Activated naive CD4-positive, alpha-beta T cell treated with anti-CD3 and anti-CD28 coated beads for 36 hours (primary cell): ENCODE measurements at regions of chr6 and their contacts with region 1.

Region 1: DNA sequence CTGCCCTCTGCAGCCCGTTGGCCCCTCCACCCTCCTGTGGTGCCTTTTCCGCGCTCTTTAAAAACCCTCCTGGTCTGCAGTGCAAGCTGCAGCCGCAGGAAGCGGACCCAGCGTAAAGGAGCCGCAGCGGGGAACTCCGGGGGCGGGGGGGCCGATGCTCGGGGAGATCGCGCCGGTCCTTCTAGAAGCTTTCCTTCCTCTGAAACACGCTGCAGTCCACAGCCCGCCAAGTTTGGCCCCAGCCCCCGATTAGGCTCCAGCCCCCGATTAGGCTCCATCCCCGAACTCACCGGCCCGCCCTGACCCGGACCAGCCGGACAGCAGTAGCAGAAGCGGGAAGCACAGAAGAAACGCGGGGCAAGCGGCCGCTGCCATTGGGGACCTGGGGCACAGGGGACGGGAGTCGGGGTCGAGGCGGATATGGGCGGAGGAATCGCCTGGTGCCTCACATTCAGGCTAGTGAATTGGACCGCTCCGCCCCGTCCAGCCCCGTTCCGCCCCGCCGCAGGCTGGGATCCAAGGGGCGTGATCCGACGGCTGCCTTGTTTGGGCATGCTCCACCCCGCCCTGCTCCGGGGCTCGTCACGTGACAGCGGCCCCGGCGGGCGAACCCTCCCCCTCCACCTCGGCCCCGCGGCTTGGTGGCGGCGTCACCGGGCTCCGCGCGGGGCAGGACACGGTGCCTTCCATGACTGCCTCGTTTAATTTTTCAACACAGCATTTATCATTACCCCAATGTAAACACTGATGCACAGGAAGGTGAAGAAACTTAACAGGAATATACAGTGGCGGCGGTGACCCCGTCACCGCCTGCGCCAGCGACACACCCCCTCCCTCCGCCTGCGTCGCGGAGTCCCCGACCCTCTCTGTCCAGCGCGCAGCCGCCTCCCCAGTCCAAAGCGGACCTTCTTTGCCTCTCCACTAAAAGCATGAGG is 20.3 kb downstream of the RAET1L start:
- DNase-seq: peak; percentile 94
- H3K4me3 Mint-ChIP-seq: peak overlapping the region; percentile 86
- H3K27ac Mint-ChIP-seq: no peak overlapping the region
- H3K4me1 Mint-ChIP-seq: peaks cover 51% of the 10 kb centered on the region
- H3K27me3 Mint-ChIP-seq: peaks cover 26% of the 10 kb centered on the region

Region 2: DNA sequence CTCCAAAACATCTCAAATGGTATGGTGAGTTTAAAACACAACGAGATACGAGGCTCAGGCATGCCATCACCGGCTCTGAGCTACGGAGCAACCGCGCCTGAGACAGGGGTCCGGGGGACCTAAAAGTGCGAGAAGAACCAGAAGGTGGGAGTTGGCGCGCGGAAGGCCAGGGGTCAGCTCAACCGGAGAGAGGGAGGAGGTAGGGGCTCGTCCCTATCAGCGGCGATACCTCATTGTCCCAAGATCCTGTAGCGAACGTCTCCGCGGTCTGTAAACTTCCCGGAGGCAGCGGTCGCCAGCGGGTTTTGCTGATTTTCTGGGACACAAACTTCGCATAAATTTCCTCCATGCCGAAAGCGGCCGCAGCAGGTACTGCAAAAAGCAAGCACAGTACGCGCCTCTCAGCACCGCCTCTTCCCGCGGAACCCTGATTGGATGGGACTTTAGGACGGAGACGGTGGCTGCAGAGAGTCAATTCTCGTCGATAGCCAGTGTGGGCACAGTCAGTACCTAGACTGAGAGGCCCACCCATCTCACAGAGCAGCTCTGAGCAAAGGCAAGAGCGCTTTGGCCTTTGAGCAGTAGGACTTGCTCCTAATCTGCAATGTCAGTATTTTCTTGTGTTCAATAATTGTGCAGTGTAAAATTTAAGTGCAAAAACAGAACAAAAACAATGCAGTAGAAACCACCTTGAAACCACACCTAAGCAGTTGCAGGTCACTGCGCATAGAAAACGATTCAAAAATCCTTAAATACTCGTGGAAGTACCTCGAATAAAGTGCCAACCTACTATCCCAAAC is 258.7 kb before region 1 on chr6 and contains the start of gene NUP43:
- CTCF ChIA-PET with region 1: no interaction called
- intact Hi-C with region 1: loop called (anchors 2 kb)
- DNase-seq: peak; percentile 99
- H3K4me3 Mint-ChIP-seq: peak within 1 kb of the TSS; percentile 99
- H3K27ac Mint-ChIP-seq: peak within 1 kb of the TSS; percentile 87
- H3K4me1 Mint-ChIP-seq: peaks cover 31% of the 10 kb centered on the region
- H3K27me3 Mint-ChIP-seq: no peaks in the 10 kb centered on the region
- total RNA-seq, gene NUP43: 68.1 to 71.9 TPM

Region 3: GRCh38 chr6:149963462-149964307 is 41.4 kb before region 1 on chr6 and contains the start of gene ULBP1:
- CTCF ChIA-PET with region 1: interaction called, 6 read pairs
- intact Hi-C with region 1: loop called (anchors 1 kb)
- DNase-seq: peak; percentile 93
- H3K4me3 Mint-ChIP-seq: peak within 1 kb of the TSS; percentile 90
- H3K27ac Mint-ChIP-seq: peak within 1 kb of the TSS; percentile 78
- H3K4me1 Mint-ChIP-seq: peaks cover 19% of the 10 kb centered on the region
- H3K27me3 Mint-ChIP-seq: peaks cover 63% of the 10 kb centered on the region
- total RNA-seq, gene ULBP1: 2.6 to 2.8 TPM

Region 4: DNA sequence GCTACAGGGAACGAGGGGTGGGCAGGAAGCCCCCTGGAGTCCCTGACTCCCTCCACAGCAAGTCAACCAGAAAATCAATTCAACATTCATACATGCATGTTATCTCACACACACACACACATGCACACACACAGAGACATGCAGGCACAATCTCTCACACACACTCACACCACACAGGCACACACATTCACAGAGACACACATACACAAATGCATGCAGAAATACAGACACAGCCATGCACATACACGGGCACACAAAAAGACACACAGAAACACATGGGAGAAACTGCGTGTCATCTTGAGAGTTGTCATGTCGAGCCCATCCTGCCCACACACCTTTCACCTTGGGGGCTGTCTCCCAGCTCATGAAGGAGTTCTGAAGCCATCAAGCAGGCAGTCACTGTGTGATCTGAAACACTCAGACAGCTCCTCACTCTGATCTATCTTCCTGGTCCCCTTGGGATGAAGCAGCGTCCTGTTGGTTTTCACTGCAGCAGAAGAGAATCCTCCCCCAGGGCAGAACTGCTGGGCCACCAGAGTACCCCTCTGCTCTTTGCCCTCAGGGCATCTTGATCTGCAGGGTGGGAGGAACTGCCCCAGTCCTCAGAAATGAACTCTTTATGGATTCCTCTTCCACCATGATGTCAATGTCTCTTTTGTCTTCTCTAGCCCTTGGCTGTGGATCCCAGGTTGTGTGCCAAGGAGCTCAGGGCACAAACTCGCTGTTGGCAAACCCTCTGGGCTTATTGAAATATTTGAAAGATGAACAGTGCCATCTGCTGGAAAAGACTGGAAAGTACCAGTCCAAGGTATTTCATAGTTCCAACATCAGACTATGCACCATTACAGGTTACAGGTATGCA is 11.5 kb after region 1 on chr6:
- CTCF ChIA-PET with region 1: no interaction called
- intact Hi-C with region 1: loop called (anchors 1 kb)
- DNase-seq: peak; percentile 66
- H3K4me3 Mint-ChIP-seq: no peak overlapping the region
- H3K27ac Mint-ChIP-seq: no peak overlapping the region
- H3K4me1 Mint-ChIP-seq: peaks cover 14% of the 10 kb centered on the region
- H3K27me3 Mint-ChIP-seq: peaks cover 70% of the 10 kb centered on the region

Region 5: GRCh38 chr6:150068720-150069648 is 63.9 kb after region 1 on chr6 and contains the start of gene ULBP3:
- CTCF ChIA-PET with region 1: no interaction called
- intact Hi-C with region 1: loop called (anchors 1 kb)
- DNase-seq: peak; percentile 83
- H3K4me3 Mint-ChIP-seq: peak within 1 kb of the TSS; percentile 72
- H3K27ac Mint-ChIP-seq: no peak within 1 kb of the TSS
- H3K4me1 Mint-ChIP-seq: peaks cover 4% of the 10 kb centered on the region
- H3K27me3 Mint-ChIP-seq: peaks cover 2% of the 10 kb centered on the region
- total RNA-seq, gene ULBP3: not detected

Region 6: DNA sequence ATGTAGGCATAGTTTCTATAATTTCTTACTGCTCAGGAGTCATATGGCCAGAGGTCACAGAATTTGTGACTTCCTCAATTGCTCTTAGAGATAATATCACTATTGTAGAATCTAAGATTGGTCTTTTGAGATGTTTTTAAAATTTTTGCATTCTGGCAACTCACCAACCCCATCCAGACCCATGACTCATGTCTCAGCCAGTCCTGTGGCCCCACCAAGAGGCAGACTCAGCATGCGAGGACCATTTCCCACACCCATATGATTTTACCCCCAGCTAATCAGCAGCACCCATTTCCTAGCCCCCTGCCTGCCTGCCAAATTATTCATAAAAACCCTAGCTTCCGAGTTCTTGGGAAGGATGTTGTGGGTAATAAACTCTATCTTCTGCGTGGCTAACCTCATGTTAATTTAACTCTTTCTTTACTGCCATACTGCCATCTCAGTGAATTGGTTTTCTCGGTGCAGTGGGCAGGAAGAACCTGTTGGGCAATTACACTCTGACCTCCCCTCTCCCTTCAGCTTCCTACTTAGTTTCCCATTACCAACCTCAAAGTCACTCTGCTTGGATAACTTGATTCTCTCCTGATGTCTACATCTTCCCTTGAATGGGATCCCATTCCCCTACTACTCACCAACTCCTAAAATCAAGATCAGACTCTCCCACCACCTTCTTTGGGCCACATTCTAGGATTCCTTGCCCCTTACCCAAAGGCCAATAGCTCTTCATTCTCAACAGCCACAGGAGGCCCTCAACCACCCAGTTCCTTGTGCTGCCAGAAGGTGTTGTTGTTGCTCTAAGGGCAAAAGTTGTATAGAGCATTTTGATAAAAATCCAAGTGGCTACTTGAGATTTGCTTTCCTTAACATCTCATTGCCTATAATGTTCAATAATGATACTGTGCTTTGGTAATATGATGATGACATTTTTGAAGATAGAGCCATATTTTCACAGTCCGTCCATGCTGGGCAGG is 347.6 kb after region 1 on chr6:
- CTCF ChIA-PET with region 1: no interaction called
- intact Hi-C with region 1: no loop called
- DNase-seq: no peak
- H3K4me3 Mint-ChIP-seq: no peak overlapping the region
- H3K27ac Mint-ChIP-seq: no peak overlapping the region
- H3K4me1 Mint-ChIP-seq: no peaks in the 10 kb centered on the region
- H3K27me3 Mint-ChIP-seq: peaks cover 3% of the 10 kb centered on the region